Naive thymus-derived CD4-positive, alpha-beta T cell (primary cell): ENCODE measurements at regions of chr7 and their contacts with region 1.

Region 1: GRCh38 chr7:992709-993607 is 10.0 kb downstream of the CYP2W1 start:
- DNase-seq: peak; percentile 78 to 90 (median 89)
- ATAC-seq: peak; percentile 100
- H3K4me3 ChIP-seq: no peak overlapping the region
- H3K4me3 Mint-ChIP-seq: peak overlapping the region in 1 of 10 donors; percentile 16
- H3K27ac ChIP-seq: no peak overlapping the region
- H3K27ac Mint-ChIP-seq: peak overlapping the region in 2 of 9 donors; percentile 28 to 51
- H3K4me1 ChIP-seq: peaks cover 4 to 5% of the 10 kb centered on the region in 2 donors
- H3K4me1 Mint-ChIP-seq: peaks cover 0 to 6% (median 5%) of the 10 kb centered on the region in 7 donors
- H3K27me3 ChIP-seq: no peaks in the 10 kb centered on the region
- H3K27me3 Mint-ChIP-seq: no peaks in the 10 kb centered on the region

Region 2: GRCh38 chr7:1028031-1028770 is 35.2 kb after region 1 on chr7:
- CTCF ChIA-PET with region 1: interaction called, 4 read pairs
- POLR2A ChIA-PET with region 1: interaction called, 3 read pairs
- intact Hi-C with region 1: loop called (anchors 1 to 5 kb)
- DNase-seq: peak; percentile 50 to 94 (median 81)
- ATAC-seq: peak; percentile 83
- H3K4me3 ChIP-seq: peak overlapping the region; percentile 64
- H3K4me3 Mint-ChIP-seq: peak overlapping the region; percentile 72 to 90 (median 80)
- H3K27ac ChIP-seq: peak overlapping the region; percentile 80
- H3K27ac Mint-ChIP-seq: peak overlapping the region in 7 of 9 donors; percentile 56 to 92 (median 86)
- H3K4me1 ChIP-seq: peaks cover 20% of the 10 kb centered on the region in 2 donors
- H3K4me1 Mint-ChIP-seq: peaks cover 25 to 59% (median 44%) of the 10 kb centered on the region in 7 donors
- H3K27me3 ChIP-seq: no peaks in the 10 kb centered on the region
- H3K27me3 Mint-ChIP-seq: no peaks in the 10 kb centered on the region

Region 3: GRCh38 chr7:1059200-1060091 is 66.5 kb after region 1 on chr7:
- CTCF ChIA-PET with region 1: interaction called, 170 read pairs
- POLR2A ChIA-PET with region 1: interaction called, 5 read pairs
- intact Hi-C with region 1: no loop called
- DNase-seq: peak in 1 of 9 donors; percentile 44
- ATAC-seq: peak; percentile 41
- H3K4me3 ChIP-seq: no peak overlapping the region
- H3K4me3 Mint-ChIP-seq: peak overlapping the region in 3 of 10 donors; percentile 14 to 73 (median 17)
- H3K27ac ChIP-seq: no peak overlapping the region
- H3K27ac Mint-ChIP-seq: peak overlapping the region in 3 of 9 donors; percentile 12 to 63 (median 39)
- H3K4me1 ChIP-seq: peaks cover 0 to 17% of the 10 kb centered on the region in 2 donors
- H3K4me1 Mint-ChIP-seq: peaks cover 16 to 52% (median 25%) of the 10 kb centered on the region in 7 donors
- H3K27me3 ChIP-seq: no peaks in the 10 kb centered on the region
- H3K27me3 Mint-ChIP-seq: peaks cover 0 to 3% (median 0%) of the 10 kb centered on the region in 5 donors

Region 4: DNA sequence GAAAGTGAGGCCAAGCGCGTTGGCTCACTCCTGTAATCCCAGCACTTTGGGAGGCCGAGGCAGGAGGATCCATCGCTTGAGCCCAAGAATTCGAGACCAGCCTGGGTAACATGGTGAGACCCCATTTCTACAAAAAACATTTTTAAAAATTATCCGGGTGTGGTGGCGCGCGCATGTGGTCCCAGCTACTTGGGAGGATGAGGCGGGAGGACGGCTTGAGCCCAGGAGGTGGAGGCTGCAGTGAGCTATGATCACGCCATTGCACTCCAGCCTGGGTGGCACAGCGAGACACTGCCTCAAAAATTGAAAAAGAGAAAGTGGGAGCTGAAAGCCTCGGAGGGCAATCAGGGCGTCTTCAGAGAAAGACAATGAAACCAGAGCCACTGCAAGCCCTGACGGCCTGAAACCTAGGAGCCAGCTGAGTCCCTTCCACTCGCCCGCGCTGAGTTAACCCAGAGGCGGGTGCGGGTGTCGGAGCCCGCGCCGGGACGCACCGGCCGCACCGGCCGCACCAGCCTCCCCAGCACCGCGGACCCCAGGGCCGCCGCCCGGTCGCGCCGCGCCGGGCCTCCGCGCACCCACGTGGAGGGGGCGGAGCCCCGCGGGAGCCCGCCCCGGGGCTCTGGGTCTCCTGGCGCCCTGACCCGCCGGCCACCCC is 144.7 kb after region 1 on chr7:
- CTCF ChIA-PET with region 1: no interaction called
- POLR2A ChIA-PET with region 1: no interaction called
- intact Hi-C with region 1: loop called in 1 of 2 experiments (anchors 1 kb)
- DNase-seq: no peak
- ATAC-seq: peak; percentile 82
- H3K4me3 ChIP-seq: peak overlapping the region; percentile 83
- H3K4me3 Mint-ChIP-seq: peak overlapping the region; percentile 74 to 94 (median 91)
- H3K27ac ChIP-seq: peak overlapping the region; percentile 82
- H3K27ac Mint-ChIP-seq: peak overlapping the region; percentile 51 to 94 (median 86)
- H3K4me1 ChIP-seq: peaks cover 7 to 13% of the 10 kb centered on the region in 2 donors
- H3K4me1 Mint-ChIP-seq: peaks cover 8 to 19% (median 16%) of the 10 kb centered on the region in 7 donors
- H3K27me3 ChIP-seq: no peaks in the 10 kb centered on the region
- H3K27me3 Mint-ChIP-seq: no peaks in the 10 kb centered on the region

Region 5: GRCh38 chr7:1175967-1176851 is 183.3 kb after region 1 on chr7:
- CTCF ChIA-PET with region 1: interaction called, 16 read pairs
- POLR2A ChIA-PET with region 1: no interaction called
- intact Hi-C with region 1: loop called (anchors 1 kb)
- DNase-seq: peak; percentile 38 to 88 (median 64)
- ATAC-seq: peak; percentile 81
- H3K4me3 ChIP-seq: peak overlapping the region; percentile 47
- H3K4me3 Mint-ChIP-seq: peak overlapping the region in 8 of 10 donors; percentile 32 to 78 (median 53)
- H3K27ac ChIP-seq: no peak overlapping the region
- H3K27ac Mint-ChIP-seq: peak overlapping the region in 1 of 9 donors; percentile 42
- H3K4me1 ChIP-seq: peaks cover 6 to 10% of the 10 kb centered on the region in 2 donors
- H3K4me1 Mint-ChIP-seq: peaks cover 7 to 15% (median 11%) of the 10 kb centered on the region in 7 donors
- H3K27me3 ChIP-seq: no peaks in the 10 kb centered on the region
- H3K27me3 Mint-ChIP-seq: peaks cover 11 to 19% (median 18%) of the 10 kb centered on the region in 5 donors